ENCODE measurements at regions of chr14 and their contacts with region 1.

Region 1: GRCh38 chr14:22973217-22974032 is 8.9 kb downstream of the AJUBA start:
- DNase-seq: peak; percentile 57
- H3K4me3 Mint-ChIP-seq: no peak overlapping the region
- H3K27ac Mint-ChIP-seq: no peak overlapping the region
- H3K4me1 Mint-ChIP-seq: no peaks in the 10 kb centered on the region
- H3K27me3 Mint-ChIP-seq: peaks cover 14% of the 10 kb centered on the region

Region 2: GRCh38 chr14:22955702-22956569 is 17.5 kb before region 1 on chr14:
- CTCF ChIA-PET with region 1: interaction called, 13 read pairs
- POLR2A ChIA-PET with region 1: no interaction called
- DNase-seq: no peak
- H3K4me3 Mint-ChIP-seq: peak overlapping the region; percentile 95
- H3K27ac Mint-ChIP-seq: peak overlapping the region; percentile 94
- H3K4me1 Mint-ChIP-seq: peaks cover 35% of the 10 kb centered on the region
- H3K27me3 Mint-ChIP-seq: peaks cover 4% of the 10 kb centered on the region

Region 3: GRCh38 chr14:22962061-22962676 is 11.3 kb before region 1 on chr14:
- CTCF ChIA-PET with region 1: interaction called, 13 read pairs
- POLR2A ChIA-PET with region 1: no interaction called
- DNase-seq: no peak
- H3K4me3 Mint-ChIP-seq: no peak overlapping the region
- H3K27ac Mint-ChIP-seq: no peak overlapping the region
- H3K4me1 Mint-ChIP-seq: peaks cover 8% of the 10 kb centered on the region
- H3K27me3 Mint-ChIP-seq: peaks cover 4% of the 10 kb centered on the region

Region 4: GRCh38 chr14:22986508-22987054 is 13.2 kb after region 1 on chr14:
- CTCF ChIA-PET with region 1: interaction called, 29 read pairs
- POLR2A ChIA-PET with region 1: no interaction called
- DNase-seq: peak; percentile 94
- H3K4me3 Mint-ChIP-seq: no peak overlapping the region
- H3K27ac Mint-ChIP-seq: no peak overlapping the region
- H3K4me1 Mint-ChIP-seq: no peaks in the 10 kb centered on the region
- H3K27me3 Mint-ChIP-seq: no peaks in the 10 kb centered on the region